ENCODE measurements at regions of chr2 and their contacts with region 1.

Region 1: GRCh38 chr2:130797493-130798435 is 39.0 kb upstream of the ARHGEF4 start:
- DNase-seq: peak; percentile 89
- H3K4me3 Mint-ChIP-seq: peak overlapping the region; percentile 73
- H3K27ac Mint-ChIP-seq: no peak overlapping the region
- H3K4me1 Mint-ChIP-seq: no peaks in the 10 kb centered on the region
- H3K27me3 Mint-ChIP-seq: peaks cover 24% of the 10 kb centered on the region

Region 2: DNA sequence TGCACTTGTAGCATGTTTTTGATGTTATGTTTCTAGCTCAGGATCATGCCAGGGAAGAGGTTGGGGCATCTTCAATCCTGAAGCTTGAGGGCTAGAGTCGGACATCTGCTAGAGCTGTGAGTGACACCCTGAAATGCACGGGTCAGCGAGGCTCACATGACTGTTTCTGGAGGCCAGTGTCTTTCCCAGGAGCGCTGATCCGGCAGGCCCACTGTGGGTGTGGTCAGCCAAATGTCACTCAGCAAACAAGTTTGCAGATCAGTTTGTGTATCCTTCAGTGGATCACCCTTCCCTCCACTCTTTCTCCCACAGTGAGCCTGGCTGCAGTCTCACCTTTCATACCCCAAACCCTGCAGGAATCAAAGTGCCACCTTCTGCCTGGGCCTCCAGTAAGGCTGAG is 16.0 kb after region 1 on chr2:
- intact Hi-C with region 1: no loop called
- DNase-seq: no peak
- H3K4me3 Mint-ChIP-seq: no peak overlapping the region
- H3K27ac Mint-ChIP-seq: no peak overlapping the region
- H3K4me1 Mint-ChIP-seq: no peaks in the 10 kb centered on the region
- H3K27me3 Mint-ChIP-seq: peaks cover 23% of the 10 kb centered on the region

Region 3: GRCh38 chr2:130824492-130825061 is 26.8 kb after region 1 on chr2:
- intact Hi-C with region 1: loop called (anchors 1 kb)
- DNase-seq: peak; percentile 72
- H3K4me3 Mint-ChIP-seq: peak overlapping the region; percentile 63
- H3K27ac Mint-ChIP-seq: peak overlapping the region; percentile 89
- H3K4me1 Mint-ChIP-seq: peaks cover 15% of the 10 kb centered on the region
- H3K27me3 Mint-ChIP-seq: peaks cover 20% of the 10 kb centered on the region

Region 4: GRCh38 chr2:130920415-130921163 is 122.8 kb after region 1 on chr2:
- intact Hi-C with region 1: loop called (anchors 1 kb)
- DNase-seq: peak; percentile 17
- H3K4me3 Mint-ChIP-seq: no peak overlapping the region
- H3K27ac Mint-ChIP-seq: no peak overlapping the region
- H3K4me1 Mint-ChIP-seq: no peaks in the 10 kb centered on the region
- H3K27me3 Mint-ChIP-seq: peaks cover 4% of the 10 kb centered on the region

Region 5: GRCh38 chr2:131093006-131093695 is 295.4 kb after region 1 on chr2 and contains the start of gene FAM168B:
- intact Hi-C with region 1: loop called (anchors 2 kb)
- DNase-seq: peak; percentile 89
- H3K4me3 Mint-ChIP-seq: peak within 1 kb of the TSS; percentile 93
- H3K27ac Mint-ChIP-seq: peak within 1 kb of the TSS; percentile 95
- H3K4me1 Mint-ChIP-seq: peaks cover 18% of the 10 kb centered on the region
- H3K27me3 Mint-ChIP-seq: no peaks in the 10 kb centered on the region
- total RNA-seq, gene FAM168B: 79.0 and 79.1 TPM in 2 replicates